Activated T-helper 2 cell treated with anti-CD3 and anti-CD28 coated beads, Interferon-gamma antibody, Interleukin-2, Interleukin-4, amounts not matched to agents 10 μg/mL and 5 μg/mL and 100 μg/mL, durations not matched to agents 14 hours and 24 hours and 36 hours (primary cell): ENCODE measurements at regions of chr4 and their contacts with region 1.

Region 1: GRCh38 chr4:55336136-55337034 is 9.7 kb upstream of the SRD5A3 start:
- DNase-seq: no peak
- H3K4me3 Mint-ChIP-seq: no peak overlapping the region
- H3K27ac Mint-ChIP-seq: peak overlapping the region; percentile 80
- H3K4me1 Mint-ChIP-seq: peaks cover 19% of the 10 kb centered on the region
- H3K27me3 Mint-ChIP-seq: no peaks in the 10 kb centered on the region

Region 2: DNA sequence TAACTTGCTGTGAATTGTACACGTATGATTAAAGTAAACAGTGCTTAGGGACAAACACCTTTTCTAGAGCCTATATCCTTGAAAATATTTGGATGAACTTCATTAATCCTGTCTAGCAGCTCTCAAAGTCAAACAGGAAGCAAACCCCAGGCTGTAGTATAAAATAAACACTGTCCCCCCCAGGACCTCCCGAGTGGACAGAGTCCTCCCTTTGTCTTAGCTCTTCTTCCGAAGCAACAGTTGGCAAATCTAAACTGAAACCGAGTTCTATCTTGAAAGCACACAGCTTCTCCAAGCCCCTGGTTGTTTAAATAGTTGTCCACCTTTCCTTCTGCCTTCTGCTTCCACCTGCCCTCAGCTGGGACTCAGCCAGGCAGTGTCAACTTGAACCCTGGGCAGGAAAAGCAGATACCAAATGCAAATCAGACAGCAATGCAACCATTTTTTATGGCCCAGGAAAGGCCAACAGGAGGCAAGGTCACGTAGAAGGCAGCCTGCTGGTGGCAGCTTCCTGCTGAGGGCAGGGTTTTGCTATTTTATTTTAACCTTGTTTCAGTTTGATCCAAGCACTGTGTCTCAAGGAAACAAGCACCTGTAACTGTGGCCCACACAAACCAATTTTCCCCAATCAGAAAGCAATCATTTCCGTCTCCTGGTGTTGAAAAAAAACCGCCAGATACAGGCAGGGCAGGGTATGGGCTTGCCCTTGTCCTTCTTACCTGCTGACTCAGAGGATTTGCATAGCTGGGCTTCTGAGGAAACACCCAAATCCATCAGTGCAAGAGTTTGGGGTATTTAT is 788.9 kb before region 1 on chr4:
- intact Hi-C with region 1: loop called (anchors 5 kb)
- DNase-seq: peak; percentile 23
- H3K4me3 Mint-ChIP-seq: no peak overlapping the region
- H3K27ac Mint-ChIP-seq: peak overlapping the region; percentile 91
- H3K4me1 Mint-ChIP-seq: peaks cover 13% of the 10 kb centered on the region
- H3K27me3 Mint-ChIP-seq: no peaks in the 10 kb centered on the region

Region 3: DNA sequence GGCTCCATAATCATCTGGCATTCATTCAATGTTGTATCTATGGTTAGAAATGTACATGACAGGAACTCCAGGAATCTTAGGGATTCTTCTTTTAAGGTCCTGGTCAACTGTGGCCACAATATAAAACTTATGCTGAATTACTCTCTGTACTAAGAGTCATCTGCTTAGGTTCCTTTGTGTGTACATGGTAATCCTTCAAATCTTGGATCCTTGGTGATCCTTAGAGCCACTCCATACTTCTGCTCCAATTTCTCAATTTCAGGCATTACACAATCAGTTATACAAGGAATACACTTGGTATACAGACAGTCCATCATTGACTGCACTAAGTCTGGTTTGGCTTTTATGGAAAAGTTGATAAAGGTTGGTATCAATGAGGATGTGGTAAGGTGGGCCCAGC is 15.4 kb after region 1 on chr4:
- intact Hi-C with region 1: no loop called
- DNase-seq: no peak
- H3K4me3 Mint-ChIP-seq: no peak overlapping the region
- H3K27ac Mint-ChIP-seq: no peak overlapping the region
- H3K4me1 Mint-ChIP-seq: peaks cover 18% of the 10 kb centered on the region
- H3K27me3 Mint-ChIP-seq: no peaks in the 10 kb centered on the region